CD4-positive, alpha-beta memory T cell (primary cell): ENCODE measurements at regions of chr13 and their contacts with region 1.

Region 1: DNA sequence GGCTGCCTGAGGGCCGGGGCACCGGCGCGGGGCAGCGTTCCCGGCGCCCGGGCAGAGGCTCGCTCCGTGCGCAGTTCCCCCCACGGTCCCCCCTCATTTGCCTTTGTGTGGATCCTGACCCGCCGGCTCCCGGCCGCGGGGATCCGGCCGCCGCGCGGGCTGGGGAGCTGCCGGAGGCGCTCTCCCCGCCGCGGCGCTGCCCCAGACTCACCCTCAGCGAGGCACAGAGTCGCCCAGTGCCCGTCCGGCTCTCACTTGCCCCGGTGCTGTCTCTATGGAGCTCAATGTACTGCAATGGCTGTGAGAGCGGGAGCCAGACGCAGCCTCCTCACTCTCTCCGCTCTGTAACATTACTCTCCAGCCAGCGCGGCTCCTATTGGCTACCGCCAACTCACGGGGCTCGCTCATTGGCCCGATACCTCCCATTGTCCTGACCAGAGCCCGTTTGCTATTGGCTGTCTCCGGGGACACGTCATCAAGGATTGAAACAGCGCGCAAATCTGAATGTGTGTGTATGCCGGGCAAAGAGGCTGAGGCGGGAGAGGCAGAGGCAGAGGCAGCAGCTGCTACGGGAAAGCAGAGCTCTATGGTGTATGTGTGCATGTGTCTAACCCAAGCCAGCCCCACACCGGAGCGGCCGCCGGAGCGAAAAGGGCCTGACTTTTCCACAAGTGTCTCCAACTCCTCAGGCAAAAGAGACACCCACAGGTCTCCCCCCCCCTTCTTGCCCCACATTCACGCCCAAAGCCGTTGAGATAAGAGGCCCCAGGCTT is at the start of gene HMGB1:
- DNase-seq: peak; percentile 96 to 98 (median 96)
- H3K4me3 ChIP-seq: peak within 1 kb of the TSS; percentile 69 to 80
- H3K4me3 Mint-ChIP-seq: peak within 1 kb of the TSS; percentile 93 to 98 (median 95)
- H3K27ac ChIP-seq: peak within 1 kb of the TSS; percentile 90
- H3K27ac Mint-ChIP-seq: peak within 1 kb of the TSS; percentile 97 to 99 (median 99)
- H3K4me1 ChIP-seq: peaks cover 33% of the 10 kb centered on the region
- H3K4me1 Mint-ChIP-seq: peaks cover 15 to 52% (median 24%) of the 10 kb centered on the region in 4 donors
- H3K27me3 ChIP-seq: no peaks in the 10 kb centered on the region
- H3K27me3 Mint-ChIP-seq: peaks cover 2 to 3% of the 10 kb centered on the region in 2 donors
- total RNA-seq, gene HMGB1: 311 to 331 TPM

Region 2: DNA sequence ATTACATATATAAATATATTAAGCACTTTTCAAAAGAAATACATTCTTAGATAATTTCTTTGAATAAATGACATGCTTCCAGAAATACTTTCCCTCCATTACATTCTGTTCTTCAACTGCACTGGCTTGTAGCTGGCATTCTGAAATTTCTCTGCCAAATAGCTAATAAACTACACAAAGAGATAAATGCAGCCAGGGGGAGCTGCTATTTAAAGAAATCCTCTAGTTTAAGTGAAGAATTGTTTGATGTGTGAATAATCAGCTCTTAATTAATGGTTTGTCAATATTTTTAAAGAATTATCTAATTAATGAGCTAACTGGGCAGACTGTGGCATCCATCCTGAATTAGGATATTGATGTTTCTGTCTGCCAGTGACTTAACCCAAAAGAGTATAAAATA is 901.0 kb before region 1 on chr13:
- CTCF ChIA-PET with region 1: no interaction called
- POLR2A ChIA-PET with region 1: no interaction called
- intact Hi-C with region 1: no loop called
- DNase-seq: no peak
- H3K4me3 ChIP-seq: no peak overlapping the region
- H3K4me3 Mint-ChIP-seq: no peak overlapping the region
- H3K27ac ChIP-seq: no peak overlapping the region
- H3K27ac Mint-ChIP-seq: peak overlapping the region in 4 of 7 donors; percentile 4 to 43 (median 24)
- H3K4me1 ChIP-seq: peaks cover 16% of the 10 kb centered on the region
- H3K4me1 Mint-ChIP-seq: peaks cover 28 to 72% (median 42%) of the 10 kb centered on the region in 4 donors
- H3K27me3 ChIP-seq: no peaks in the 10 kb centered on the region
- H3K27me3 Mint-ChIP-seq: no peaks in the 10 kb centered on the region

Region 3: DNA sequence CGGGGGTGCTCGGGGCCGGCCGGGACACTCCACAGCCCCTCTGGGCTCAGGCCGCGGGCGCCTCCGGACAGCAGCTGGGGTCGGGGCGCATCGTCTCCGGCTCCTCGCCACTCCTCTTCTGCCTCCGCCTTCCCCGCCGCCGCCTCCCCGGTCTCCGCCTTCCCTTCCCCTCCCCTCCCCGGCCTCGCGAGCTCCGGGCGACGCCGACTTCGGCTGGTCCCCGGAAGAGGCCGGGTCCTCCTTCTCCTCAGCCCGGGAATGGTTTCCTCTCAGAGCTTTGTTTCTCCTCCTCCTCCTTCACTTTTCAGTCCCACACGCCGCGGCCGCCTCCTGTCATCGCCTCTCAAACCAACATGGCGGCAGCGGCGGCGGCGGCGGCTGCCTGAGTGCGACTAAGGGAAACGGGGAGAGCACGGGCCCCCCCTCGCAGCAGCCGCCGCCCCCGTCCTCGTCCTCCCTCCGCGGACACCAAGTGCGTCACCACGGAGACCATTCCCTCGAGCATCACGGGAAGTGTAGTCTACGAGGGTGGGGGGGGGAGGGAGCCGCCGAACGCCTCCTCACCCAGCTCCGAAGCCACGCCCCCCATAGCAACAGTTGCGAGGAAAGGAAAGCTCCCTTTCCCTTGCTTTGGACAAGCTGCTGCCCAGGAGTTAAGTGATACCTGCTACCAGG is 615.4 kb before region 1 on chr13 and contains the start of gene UBL3:
- CTCF ChIA-PET with region 1: no interaction called
- POLR2A ChIA-PET with region 1: interaction called, 9 read pairs
- intact Hi-C with region 1: loop called (anchors 1 kb)
- DNase-seq: peak; percentile 91 to 96 (median 93)
- H3K4me3 ChIP-seq: peak within 1 kb of the TSS; percentile 85 to 93
- H3K4me3 Mint-ChIP-seq: peak within 1 kb of the TSS; percentile 93 to 99 (median 98)
- H3K27ac ChIP-seq: peak within 1 kb of the TSS; percentile 94
- H3K27ac Mint-ChIP-seq: peak within 1 kb of the TSS; percentile 97 to 100 (median 99)
- H3K4me1 ChIP-seq: peaks cover 28% of the 10 kb centered on the region
- H3K4me1 Mint-ChIP-seq: peaks cover 18 to 39% (median 24%) of the 10 kb centered on the region in 4 donors
- H3K27me3 ChIP-seq: no peaks in the 10 kb centered on the region
- H3K27me3 Mint-ChIP-seq: no peaks in the 10 kb centered on the region
- total RNA-seq, gene UBL3: 45.7 to 47.0 TPM

Region 4: GRCh38 chr13:30148171-30148754 is 317.5 kb before region 1 on chr13:
- CTCF ChIA-PET with region 1: no interaction called
- POLR2A ChIA-PET with region 1: interaction called, 27 read pairs
- intact Hi-C with region 1: loop called (anchors 1 kb)
- DNase-seq: peak; percentile 73 to 81 (median 80)
- H3K4me3 ChIP-seq: peak overlapping the region in 1 of 2 donors; percentile 31
- H3K4me3 Mint-ChIP-seq: peak overlapping the region in 7 of 8 donors; percentile 70 to 88 (median 75)
- H3K27ac ChIP-seq: peak overlapping the region; percentile 60
- H3K27ac Mint-ChIP-seq: peak overlapping the region; percentile 90 to 97 (median 93)
- H3K4me1 ChIP-seq: peaks cover 99% of the 10 kb centered on the region
- H3K4me1 Mint-ChIP-seq: peaks cover 79 to 100% (median 93%) of the 10 kb centered on the region in 4 donors
- H3K27me3 ChIP-seq: no peaks in the 10 kb centered on the region
- H3K27me3 Mint-ChIP-seq: no peaks in the 10 kb centered on the region

Region 5: GRCh38 chr13:30346153-30346788 is 119.5 kb before region 1 on chr13:
- CTCF ChIA-PET with region 1: no interaction called
- POLR2A ChIA-PET with region 1: interaction called, 9 read pairs
- intact Hi-C with region 1: loop called (anchors 2 kb)
- DNase-seq: peak; percentile 76 to 82 (median 79)
- H3K4me3 ChIP-seq: peak overlapping the region in 1 of 2 donors; percentile 10
- H3K4me3 Mint-ChIP-seq: peak overlapping the region; percentile 45 to 88 (median 70)
- H3K27ac ChIP-seq: no peak overlapping the region
- H3K27ac Mint-ChIP-seq: peak overlapping the region; percentile 10 to 86 (median 45)
- H3K4me1 ChIP-seq: peaks cover 42% of the 10 kb centered on the region
- H3K4me1 Mint-ChIP-seq: peaks cover 35 to 48% (median 41%) of the 10 kb centered on the region in 4 donors
- H3K27me3 ChIP-seq: no peaks in the 10 kb centered on the region
- H3K27me3 Mint-ChIP-seq: no peaks in the 10 kb centered on the region

Region 6: DNA sequence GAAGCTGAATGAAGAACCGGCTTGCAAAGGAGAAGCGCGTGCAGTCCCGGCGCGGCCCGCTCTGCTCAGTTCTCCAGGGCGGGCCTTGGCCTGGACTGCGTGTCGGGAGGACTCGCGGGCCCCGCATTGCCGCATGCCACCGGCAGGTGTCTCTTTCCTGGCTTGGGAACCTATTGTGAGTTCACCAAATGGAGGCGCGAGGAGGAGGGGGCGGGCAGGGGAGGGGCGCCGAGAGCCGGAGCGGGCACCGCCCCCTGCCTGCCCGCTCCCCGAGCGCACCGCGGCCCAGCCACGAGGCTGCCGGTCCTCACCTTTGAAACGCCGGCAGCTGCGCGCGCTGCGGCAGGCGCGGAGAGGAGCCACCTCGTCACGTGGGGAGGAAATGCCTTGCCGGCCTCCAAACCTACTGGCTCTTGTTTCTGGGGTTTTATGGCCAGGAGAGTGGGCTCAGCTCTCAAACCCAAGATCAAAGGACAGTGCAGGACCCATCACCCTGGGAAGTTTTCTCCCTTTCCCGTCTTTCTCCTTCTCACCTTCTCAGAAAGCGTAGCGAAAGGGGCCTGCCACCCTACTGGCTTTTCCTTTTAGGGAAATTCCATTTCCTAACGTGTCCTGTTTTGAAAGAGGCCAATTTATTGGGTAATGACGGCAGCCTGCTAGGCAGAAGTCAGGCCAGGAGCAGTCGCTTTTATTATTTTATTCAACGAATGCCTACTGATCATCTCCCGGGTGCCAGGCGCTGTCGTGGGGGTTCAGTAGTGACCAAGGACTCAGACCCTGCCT is 57.3 kb before region 1 on chr13:
- CTCF ChIA-PET with region 1: interaction called, 7 read pairs
- POLR2A ChIA-PET with region 1: interaction called, 21 read pairs
- intact Hi-C with region 1: loop called (anchors 1 kb)
- DNase-seq: peak; percentile 87 to 91 (median 87)
- H3K4me3 ChIP-seq: peak overlapping the region in 1 of 2 donors; percentile 33
- H3K4me3 Mint-ChIP-seq: peak overlapping the region; percentile 46 to 79 (median 68)
- H3K27ac ChIP-seq: peak overlapping the region; percentile 40
- H3K27ac Mint-ChIP-seq: peak overlapping the region; percentile 75 to 91 (median 87)
- H3K4me1 ChIP-seq: peaks cover 14% of the 10 kb centered on the region
- H3K4me1 Mint-ChIP-seq: peaks cover 14 to 52% (median 27%) of the 10 kb centered on the region in 4 donors
- H3K27me3 ChIP-seq: no peaks in the 10 kb centered on the region
- H3K27me3 Mint-ChIP-seq: no peaks in the 10 kb centered on the region

Region 7: GRCh38 chr13:30617315-30618185 is 151.8 kb after region 1 on chr13 and contains the start of gene USPL1:
- CTCF ChIA-PET with region 1: interaction called, 5 read pairs
- POLR2A ChIA-PET with region 1: interaction called, 86 read pairs
- intact Hi-C with region 1: loop called (anchors 1 kb)
- DNase-seq: peak; percentile 97 to 99 (median 98)
- H3K4me3 ChIP-seq: peak within 1 kb of the TSS; percentile 98 to 99
- H3K4me3 Mint-ChIP-seq: no peak within 1 kb of the TSS
- H3K27ac ChIP-seq: peak within 1 kb of the TSS; percentile 94
- H3K27ac Mint-ChIP-seq: no peak within 1 kb of the TSS
- H3K4me1 ChIP-seq: peaks cover 40% of the 10 kb centered on the region
- H3K4me1 Mint-ChIP-seq: peaks cover 15 to 27% (median 25%) of the 10 kb centered on the region in 4 donors
- H3K27me3 ChIP-seq: no peaks in the 10 kb centered on the region
- H3K27me3 Mint-ChIP-seq: no peaks in the 10 kb centered on the region
- total RNA-seq, gene USPL1: 30.4 to 31.8 TPM

Region 8: DNA sequence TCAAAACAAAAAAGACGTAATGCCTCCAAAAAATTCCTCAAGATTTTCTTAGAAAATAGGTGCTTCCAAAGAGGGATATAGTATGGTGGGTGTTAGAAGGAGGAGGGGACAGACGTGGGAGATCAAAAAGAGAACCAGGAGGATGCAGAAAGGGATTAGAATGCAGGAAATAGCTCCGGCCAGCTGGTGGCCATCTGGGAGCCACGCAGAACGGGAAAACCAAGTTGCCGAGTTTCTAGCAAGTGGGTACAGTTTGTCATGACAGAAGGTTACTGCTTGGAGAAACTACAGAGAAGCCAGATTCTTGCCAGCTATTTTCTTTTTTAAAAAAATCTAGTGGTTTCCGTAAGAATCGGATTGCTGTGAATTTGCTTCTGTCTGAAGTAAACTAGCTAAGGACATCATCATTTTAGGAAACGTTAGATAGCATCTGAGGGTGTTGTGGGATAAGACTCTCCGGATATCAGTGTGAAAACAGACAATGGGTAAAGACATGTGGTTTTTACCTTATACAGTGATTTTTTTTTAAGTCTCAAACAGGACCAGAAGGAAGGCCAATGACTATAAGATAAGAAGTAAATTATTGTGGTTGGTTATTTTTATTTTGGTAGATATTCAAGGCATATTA is 591.0 kb after region 1 on chr13:
- CTCF ChIA-PET with region 1: no interaction called
- POLR2A ChIA-PET with region 1: no interaction called
- intact Hi-C with region 1: no loop called
- DNase-seq: no peak
- H3K4me3 ChIP-seq: no peak overlapping the region
- H3K4me3 Mint-ChIP-seq: peak overlapping the region in 1 of 8 donors; percentile 27
- H3K27ac ChIP-seq: no peak overlapping the region
- H3K27ac Mint-ChIP-seq: peak overlapping the region in 1 of 7 donors; percentile 71
- H3K4me1 ChIP-seq: no peaks in the 10 kb centered on the region
- H3K4me1 Mint-ChIP-seq: no peaks in the 10 kb centered on the region
- H3K27me3 ChIP-seq: peaks cover 6% of the 10 kb centered on the region
- H3K27me3 Mint-ChIP-seq: peaks cover 8 to 12% of the 10 kb centered on the region in 2 donors

Region 9: GRCh38 chr13:31161828-31162590 is 696.2 kb after region 1 on chr13 and contains the start of gene HSPH1:
- CTCF ChIA-PET with region 1: no interaction called
- POLR2A ChIA-PET with region 1: no interaction called
- intact Hi-C with region 1: loop called (anchors 5 kb)
- DNase-seq: peak; percentile 99 to 100 (median 100)
- H3K4me3 ChIP-seq: peak within 1 kb of the TSS; percentile 79 to 96
- H3K4me3 Mint-ChIP-seq: peak within 1 kb of the TSS; percentile 96 to 99 (median 98)
- H3K27ac ChIP-seq: peak within 1 kb of the TSS; percentile 95
- H3K27ac Mint-ChIP-seq: peak within 1 kb of the TSS; percentile 97 to 100 (median 99)
- H3K4me1 ChIP-seq: peaks cover 37% of the 10 kb centered on the region
- H3K4me1 Mint-ChIP-seq: peaks cover 23 to 54% (median 29%) of the 10 kb centered on the region in 4 donors
- H3K27me3 ChIP-seq: no peaks in the 10 kb centered on the region
- H3K27me3 Mint-ChIP-seq: no peaks in the 10 kb centered on the region
- total RNA-seq, gene HSPH1: 68.6 to 75.5 TPM